Activated CD4-positive, alpha-beta T cell treated with anti-CD3 and anti-CD28 coated beads, Interleukin-2, amount 10 ng/mL, durations not matched to agents 24 days and 14 days (primary cell): ENCODE measurements at regions of chr14 and their contacts with region 1.

Region 1: DNA sequence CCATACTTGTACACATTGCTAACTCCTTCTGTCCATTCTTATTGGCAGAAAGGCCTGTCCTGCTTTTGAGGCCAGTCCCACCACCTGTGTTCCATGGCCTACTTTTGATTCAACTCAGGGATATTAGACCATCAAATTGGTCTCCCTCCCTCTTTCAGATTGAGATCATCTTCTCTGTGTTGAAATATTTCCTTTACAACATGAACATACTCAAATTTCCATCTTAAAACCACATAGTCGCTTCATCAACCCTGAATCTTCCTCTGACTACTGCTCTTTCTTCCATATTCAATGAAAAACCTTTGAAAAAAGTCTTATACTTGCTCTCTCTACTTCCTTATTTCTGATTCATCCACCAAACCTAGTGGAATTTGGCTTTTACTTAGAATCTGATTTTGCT is 34.9 kb downstream of the TRMT5 start:
- DNase-seq: no peak
- H3K4me3 Mint-ChIP-seq: no peak overlapping the region
- H3K27ac Mint-ChIP-seq: peak overlapping the region; percentile 22
- H3K4me1 Mint-ChIP-seq: peaks cover 9% of the 10 kb centered on the region
- H3K27me3 Mint-ChIP-seq: no peaks in the 10 kb centered on the region

Region 2: GRCh38 chr14:60859525-60859924 is 86.5 kb before region 1 on chr14:
- intact Hi-C with region 1: loop called (anchors 1 kb)
- DNase-seq: no peak
- H3K4me3 Mint-ChIP-seq: no peak overlapping the region
- H3K27ac Mint-ChIP-seq: no peak overlapping the region
- H3K4me1 Mint-ChIP-seq: peaks cover 8% of the 10 kb centered on the region
- H3K27me3 Mint-ChIP-seq: peaks cover 5% of the 10 kb centered on the region

Region 3: GRCh38 chr14:60965402-60965801 is 19.4 kb after region 1 on chr14:
- intact Hi-C with region 1: no loop called
- DNase-seq: no peak
- H3K4me3 Mint-ChIP-seq: no peak overlapping the region
- H3K27ac Mint-ChIP-seq: peak overlapping the region; percentile 52
- H3K4me1 Mint-ChIP-seq: peaks cover 6% of the 10 kb centered on the region
- H3K27me3 Mint-ChIP-seq: no peaks in the 10 kb centered on the region